Mammary epithelial cell (primary cell): ENCODE measurements at regions of chr7 and their contacts with region 1.

Region 1: GRCh38 chr7:25951031-25951948 is 200.7 kb upstream of the NFE2L3 start:
- DNase-seq: peak; percentile 89
- H3K4me3 ChIP-seq: peak overlapping the region; percentile 63 to 78 (median 77)
- H3K27ac ChIP-seq: peak overlapping the region; percentile 65
- H3K4me1 ChIP-seq: peaks cover 16% of the 10 kb centered on the region
- H3K27me3 ChIP-seq: no peaks in the 10 kb centered on the region
- CTCF ChIP-seq: no peak

Region 2: GRCh38 chr7:26061688-26062150 is 110.4 kb after region 1 on chr7:
- CTCF ChIA-PET with region 1: no interaction called
- dilution Hi-C with region 1: loop called (anchors 5 kb)
- in situ Hi-C with region 1: no loop called
- intact Hi-C with region 1: loop called (anchors 5 kb)
- DNase-seq: peak; percentile 56
- H3K4me3 ChIP-seq: no peak overlapping the region
- H3K27ac ChIP-seq: no peak overlapping the region
- H3K4me1 ChIP-seq: peaks cover 4% of the 10 kb centered on the region
- H3K27me3 ChIP-seq: no peaks in the 10 kb centered on the region
- CTCF ChIP-seq: peak; percentile 85 to 92

Region 3: DNA sequence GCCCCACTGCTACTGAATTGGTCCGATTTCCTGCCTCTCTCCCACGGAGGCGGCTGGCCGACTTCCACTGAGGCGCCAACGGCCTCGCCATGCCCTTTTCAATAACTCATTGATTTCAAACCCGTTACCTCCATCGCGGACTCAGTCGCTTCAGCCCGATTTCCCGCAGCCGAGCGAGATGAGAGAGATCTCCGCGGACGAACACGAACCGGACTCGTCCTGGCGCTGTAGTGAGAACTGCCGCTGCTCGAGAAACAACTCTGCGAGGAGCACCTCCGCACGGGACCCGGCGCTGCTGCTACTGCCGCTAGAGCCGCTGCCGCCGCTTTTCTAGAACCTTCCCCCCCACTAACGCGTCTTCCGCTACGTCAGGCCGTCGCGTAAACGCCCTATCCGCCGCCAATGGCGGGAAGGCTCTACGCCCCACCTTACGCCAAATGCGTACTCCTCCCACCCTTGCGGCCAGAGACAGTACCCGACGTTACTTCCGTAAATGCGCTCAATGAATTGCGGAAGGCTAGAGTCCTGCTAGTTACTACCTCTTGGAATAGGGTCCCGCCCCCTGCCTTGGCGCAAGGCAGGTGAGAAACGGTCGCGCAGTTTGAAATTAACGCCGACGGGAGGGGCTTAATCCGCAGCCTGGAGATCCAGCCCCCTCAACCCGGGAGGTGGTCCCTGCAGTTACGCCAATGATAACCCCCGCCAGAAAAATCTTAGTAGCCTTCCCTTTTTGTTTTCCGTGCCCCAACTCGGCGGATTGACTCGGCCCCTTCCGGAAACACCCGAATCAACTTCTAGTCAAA is 249.4 kb after region 1 on chr7 and contains the start of gene HNRNPA2B1:
- CTCF ChIA-PET with region 1: no interaction called
- dilution Hi-C with region 1: no loop called
- in situ Hi-C with region 1: no loop called
- intact Hi-C with region 1: loop called (anchors 5 kb)
- DNase-seq: peak; percentile 97
- H3K4me3 ChIP-seq: peak within 1 kb of the TSS; percentile 99 to 100 (median 100)
- H3K27ac ChIP-seq: peak within 1 kb of the TSS; percentile 93
- H3K4me1 ChIP-seq: peaks cover 28% of the 10 kb centered on the region
- H3K27me3 ChIP-seq: no peaks in the 10 kb centered on the region
- CTCF ChIP-seq: no peak
- total RNA-seq, gene HNRNPA2B1: 62.0 to 506 TPM